ACHN (cell line): ENCODE measurements at regions of chr16 and their contacts with region 1.

Region 1: GRCh38 chr16:77584205-77584859 is 138.0 kb upstream of the NUDT7 start:
- DNase-seq: peak; percentile 81

Region 2: GRCh38 chr16:77223184-77223583 is 361.1 kb before region 1 on chr16:
- in situ Hi-C with region 1: loop called (anchors 10 kb)
- DNase-seq: peak; percentile 50